H1 (cell line): ENCODE measurements at regions of chr12 and their contacts with region 1.

Region 1: DNA sequence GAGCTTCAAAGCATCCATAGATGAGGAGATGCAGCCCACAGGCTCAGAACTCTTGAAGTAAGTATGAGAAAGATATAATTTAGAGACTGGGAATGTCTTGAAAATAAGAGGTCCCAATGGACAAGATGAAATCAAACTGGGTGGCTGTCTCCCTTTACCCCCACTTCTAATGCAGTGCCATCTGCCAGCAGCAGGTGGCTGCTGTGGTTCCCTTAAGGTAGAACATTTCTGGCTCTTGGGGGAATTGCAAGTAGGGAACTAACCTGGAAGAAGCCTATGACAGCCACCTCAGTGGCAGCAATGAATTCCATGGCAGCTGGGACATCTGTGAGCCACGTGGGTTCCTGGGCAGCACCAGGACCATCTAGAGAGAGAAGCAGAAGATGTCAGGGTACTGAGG is 648 bp downstream of the ERP27 start:
- DNase-seq: no peak
- H3K4me3 ChIP-seq: no peak overlapping the region
- H3K27ac ChIP-seq: no peak overlapping the region
- H3K4me1 ChIP-seq: no peaks in the 10 kb centered on the region
- H3K27me3 ChIP-seq: no peaks in the 10 kb centered on the region
- CTCF ChIP-seq: peak; percentile 33 to 61 (median 41)
- EP300 ChIP-seq: no peak
- POLR2A ChIP-seq: no peak
- RAD21 ChIP-seq: peak; percentile 37 to 49; a peak in 3 of 4 replicates

Region 2: GRCh38 chr12:14873440-14874185 is 64.1 kb before region 1 on chr12:
- CTCF ChIA-PET with region 1: no interaction called
- POLR2A ChIA-PET with region 1: no interaction called
- DNase-seq: no peak
- H3K4me3 ChIP-seq: no peak overlapping the region
- H3K27ac ChIP-seq: no peak overlapping the region
- H3K4me1 ChIP-seq: no peaks in the 10 kb centered on the region
- H3K27me3 ChIP-seq: no peaks in the 10 kb centered on the region
- CTCF ChIP-seq: no peak
- EP300 ChIP-seq: no peak
- POLR2A ChIP-seq: no peak
- RAD21 ChIP-seq: no peak

Region 3: GRCh38 chr12:14901228-14901562 is 36.5 kb before region 1 on chr12:
- CTCF ChIA-PET with region 1: interaction called, 11 read pairs
- POLR2A ChIA-PET with region 1: no interaction called
- DNase-seq: no peak
- H3K4me3 ChIP-seq: no peak overlapping the region
- H3K27ac ChIP-seq: no peak overlapping the region
- H3K4me1 ChIP-seq: no peaks in the 10 kb centered on the region
- H3K27me3 ChIP-seq: no peaks in the 10 kb centered on the region
- CTCF ChIP-seq: peak in 2 of 3 experiments; percentile 18 to 43; a peak in 3 of 4 replicates
- EP300 ChIP-seq: no peak
- POLR2A ChIP-seq: no peak
- RAD21 ChIP-seq: peak in 1 of 2 experiments; percentile 22; a peak in 1 of 4 replicates

Region 4: DNA sequence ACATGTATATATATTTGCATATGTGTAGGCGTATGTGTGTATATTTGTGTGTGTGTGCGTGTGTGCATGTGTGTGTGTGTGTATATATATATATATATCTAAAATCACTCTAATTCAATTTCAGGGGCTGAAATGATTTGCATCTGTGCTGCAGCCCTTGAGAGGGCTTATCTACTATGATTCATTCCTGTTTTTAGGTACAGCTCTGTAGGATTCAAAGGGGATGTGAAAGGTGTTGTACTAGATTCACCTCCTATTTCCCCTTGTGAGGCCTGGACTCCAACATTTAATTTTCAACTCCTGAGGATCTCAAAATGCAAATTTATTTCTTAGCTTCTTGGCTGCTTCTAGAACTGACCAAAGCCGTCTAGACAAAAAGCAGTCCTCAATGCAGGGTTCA is 10.4 kb before region 1 on chr12:
- CTCF ChIA-PET with region 1: interaction called, 15 read pairs
- POLR2A ChIA-PET with region 1: no interaction called
- DNase-seq: no peak
- H3K4me3 ChIP-seq: no peak overlapping the region
- H3K27ac ChIP-seq: no peak overlapping the region
- H3K4me1 ChIP-seq: no peaks in the 10 kb centered on the region
- H3K27me3 ChIP-seq: no peaks in the 10 kb centered on the region
- CTCF ChIP-seq: no peak
- EP300 ChIP-seq: no peak
- POLR2A ChIP-seq: no peak
- RAD21 ChIP-seq: no peak

Region 5: GRCh38 chr12:14956024-14956891 is 18.6 kb after region 1 on chr12:
- CTCF ChIA-PET with region 1: interaction called, 18 read pairs
- POLR2A ChIA-PET with region 1: no interaction called
- DNase-seq: no peak
- H3K4me3 ChIP-seq: no peak overlapping the region
- H3K27ac ChIP-seq: no peak overlapping the region
- H3K4me1 ChIP-seq: no peaks in the 10 kb centered on the region
- H3K27me3 ChIP-seq: no peaks in the 10 kb centered on the region
- CTCF ChIP-seq: no peak
- EP300 ChIP-seq: no peak
- POLR2A ChIP-seq: no peak
- RAD21 ChIP-seq: no peak

Region 6: GRCh38 chr12:14995583-14996425 is 58.1 kb after region 1 on chr12:
- CTCF ChIA-PET with region 1: interaction called, 22 read pairs
- POLR2A ChIA-PET with region 1: no interaction called
- DNase-seq: no peak
- H3K4me3 ChIP-seq: no peak overlapping the region
- H3K27ac ChIP-seq: no peak overlapping the region
- H3K4me1 ChIP-seq: no peaks in the 10 kb centered on the region
- H3K27me3 ChIP-seq: no peaks in the 10 kb centered on the region
- CTCF ChIP-seq: peak in 2 of 3 experiments; percentile 40 to 43; a peak in 2 of 4 replicates
- EP300 ChIP-seq: no peak
- POLR2A ChIP-seq: no peak
- RAD21 ChIP-seq: peak in 1 of 2 experiments; percentile 77

Region 7: GRCh38 chr12:15001733-15002382 is 64.2 kb after region 1 on chr12:
- CTCF ChIA-PET with region 1: interaction called, 11 read pairs
- POLR2A ChIA-PET with region 1: no interaction called
- DNase-seq: peak; percentile 33 to 54
- H3K4me3 ChIP-seq: no peak overlapping the region
- H3K27ac ChIP-seq: no peak overlapping the region
- H3K4me1 ChIP-seq: peaks cover 2 to 8% (median 3%) of the 10 kb centered on the region in 4 experiments; a peak in 4 of 7 replicates
- H3K27me3 ChIP-seq: no peaks in the 10 kb centered on the region
- CTCF ChIP-seq: no peak
- EP300 ChIP-seq: no peak
- POLR2A ChIP-seq: no peak
- RAD21 ChIP-seq: peak; percentile 30 to 44; a peak in 3 of 4 replicates